ENCODE measurements at regions of chr5 and their contacts with region 1.

Region 1: GRCh38 chr5:111550279-111551020 is 38.1 kb upstream of the STARD4 start:
- DNase-seq: peak; percentile 91
- H3K4me3 ChIP-seq: no peak overlapping the region
- H3K27ac ChIP-seq: no peak overlapping the region
- H3K4me1 ChIP-seq: peaks cover 8% of the 10 kb centered on the region
- H3K27me3 ChIP-seq: no peaks in the 10 kb centered on the region
- CTCF ChIP-seq: peak; percentile 68 to 75 (median 73)
- POLR2A ChIP-seq: no peak

Region 2: DNA sequence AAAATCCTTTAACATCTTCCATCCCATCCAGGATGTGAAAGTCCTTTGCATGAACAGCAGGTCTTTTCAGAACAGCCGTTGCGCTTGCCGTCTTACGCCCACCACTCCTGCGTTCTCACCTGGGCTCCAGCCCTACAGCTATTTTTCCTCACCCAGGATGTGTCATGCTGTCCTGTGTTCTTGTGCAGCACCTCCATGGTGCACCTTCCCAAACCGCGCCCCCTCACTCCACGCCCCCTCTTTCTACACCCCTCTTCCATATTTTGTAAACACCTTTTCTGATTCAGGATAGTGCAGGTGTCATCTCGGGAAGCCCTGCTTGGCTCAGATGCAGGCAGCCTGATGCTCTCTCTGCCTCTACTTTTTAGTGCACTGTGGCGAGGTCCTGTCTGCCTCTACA is 307.8 kb before region 1 on chr5:
- intact Hi-C with region 1: no loop called
- DNase-seq: no peak
- H3K4me3 ChIP-seq: no peak overlapping the region
- H3K27ac ChIP-seq: no peak overlapping the region
- H3K4me1 ChIP-seq: no peaks in the 10 kb centered on the region
- H3K27me3 ChIP-seq: no peaks in the 10 kb centered on the region
- CTCF ChIP-seq: no peak
- POLR2A ChIP-seq: no peak

Region 3: GRCh38 chr5:111472579-111472978 is 77.9 kb before region 1 on chr5:
- intact Hi-C with region 1: no loop called
- DNase-seq: no peak
- H3K4me3 ChIP-seq: no peak overlapping the region
- H3K27ac ChIP-seq: no peak overlapping the region
- H3K4me1 ChIP-seq: peaks cover 4% of the 10 kb centered on the region
- H3K27me3 ChIP-seq: no peaks in the 10 kb centered on the region
- CTCF ChIP-seq: no peak
- POLR2A ChIP-seq: no peak

Region 4: GRCh38 chr5:112146323-112147226 is 596.1 kb after region 1 on chr5:
- intact Hi-C with region 1: loop called (anchors 5 kb)
- DNase-seq: peak; percentile 79
- H3K4me3 ChIP-seq: no peak overlapping the region
- H3K27ac ChIP-seq: no peak overlapping the region
- H3K4me1 ChIP-seq: no peaks in the 10 kb centered on the region
- H3K27me3 ChIP-seq: no peaks in the 10 kb centered on the region
- CTCF ChIP-seq: peak; percentile 86 to 93 (median 92)
- POLR2A ChIP-seq: no peak